PC-3 (cell line): ENCODE measurements at regions of chr16 and their contacts with region 1.

Region 1: DNA sequence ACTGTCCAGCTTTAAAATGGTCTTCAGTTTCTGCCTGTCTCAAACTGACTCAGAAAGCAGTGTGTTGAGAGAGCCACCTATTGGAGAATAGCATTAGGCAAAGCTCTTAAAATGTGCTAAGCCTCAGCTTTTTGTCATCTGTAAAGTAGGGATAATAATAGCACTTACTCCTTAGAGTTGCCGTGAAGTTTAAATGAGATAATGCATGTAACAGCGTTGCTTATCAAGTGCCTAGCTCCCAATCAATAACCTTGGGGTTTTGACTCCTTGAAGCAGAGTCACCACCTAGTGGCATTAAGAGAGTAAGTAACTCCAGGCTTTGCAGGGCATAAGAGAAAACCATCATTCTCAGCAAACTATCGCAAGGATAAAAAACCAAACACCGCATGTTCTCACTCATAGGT is 163.3 kb downstream of the HS3ST2 start:
- DNase-seq: peak; percentile 25
- ATAC-seq: peak; percentile 54
- H3K4me3 ChIP-seq: no peak overlapping the region
- H3K27ac ChIP-seq: no peak overlapping the region
- H3K4me1 ChIP-seq: no peaks in the 10 kb centered on the region
- H3K27me3 ChIP-seq: peaks cover 6% of the 10 kb centered on the region; the same call in 1 of the 2 replicates
- CTCF ChIP-seq: peak; percentile 62

Region 2: DNA sequence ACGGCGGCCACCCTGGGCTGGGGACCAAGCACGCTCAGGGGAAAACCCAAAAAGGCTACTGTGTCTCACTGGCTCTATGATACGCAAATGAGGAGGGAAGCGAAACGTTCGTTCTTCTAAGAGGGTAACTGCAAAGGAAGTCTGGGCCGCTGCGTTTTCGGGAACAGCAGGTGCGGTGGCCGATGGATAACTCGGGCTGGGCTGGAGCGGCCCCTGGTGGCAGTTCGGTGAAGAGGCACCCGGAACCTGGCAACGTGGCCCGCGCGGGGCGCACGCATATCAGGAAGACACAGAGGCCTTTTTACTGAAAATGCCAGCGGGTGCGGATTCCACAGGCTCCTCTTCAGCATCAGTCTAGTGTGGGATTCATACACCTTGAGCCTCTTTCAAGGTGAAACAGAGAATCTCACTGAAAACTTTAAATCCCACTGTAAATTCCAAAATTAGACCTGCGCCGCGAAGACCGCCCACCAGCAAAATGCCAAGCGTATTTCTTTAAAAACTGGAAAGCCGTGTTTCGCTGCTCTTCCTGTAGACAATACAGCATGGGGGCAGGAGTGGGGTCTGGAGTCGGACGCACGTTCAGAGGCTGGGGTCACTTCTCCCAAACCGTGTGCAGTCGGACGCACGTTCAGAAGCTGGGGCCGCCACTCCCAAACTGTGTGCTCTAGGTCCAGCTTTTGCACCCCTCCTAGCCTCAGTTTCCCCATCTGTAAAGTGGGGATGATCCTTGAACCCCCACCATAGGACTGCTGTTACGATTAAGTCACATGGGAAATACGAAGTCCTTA is 1422.3 kb before region 1 on chr16:
- CTCF ChIA-PET with region 1: no interaction called
- POLR2A ChIA-PET with region 1: no interaction called
- intact Hi-C with region 1: loop called (anchors 10 kb)
- DNase-seq: peak; percentile 86
- ATAC-seq: peak; percentile 92
- H3K4me3 ChIP-seq: peak overlapping the region; percentile 59
- H3K27ac ChIP-seq: no peak overlapping the region
- H3K4me1 ChIP-seq: peaks cover 5% of the 10 kb centered on the region
- H3K27me3 ChIP-seq: no peaks in the 10 kb centered on the region
- CTCF ChIP-seq: peak; percentile 89

Region 3: DNA sequence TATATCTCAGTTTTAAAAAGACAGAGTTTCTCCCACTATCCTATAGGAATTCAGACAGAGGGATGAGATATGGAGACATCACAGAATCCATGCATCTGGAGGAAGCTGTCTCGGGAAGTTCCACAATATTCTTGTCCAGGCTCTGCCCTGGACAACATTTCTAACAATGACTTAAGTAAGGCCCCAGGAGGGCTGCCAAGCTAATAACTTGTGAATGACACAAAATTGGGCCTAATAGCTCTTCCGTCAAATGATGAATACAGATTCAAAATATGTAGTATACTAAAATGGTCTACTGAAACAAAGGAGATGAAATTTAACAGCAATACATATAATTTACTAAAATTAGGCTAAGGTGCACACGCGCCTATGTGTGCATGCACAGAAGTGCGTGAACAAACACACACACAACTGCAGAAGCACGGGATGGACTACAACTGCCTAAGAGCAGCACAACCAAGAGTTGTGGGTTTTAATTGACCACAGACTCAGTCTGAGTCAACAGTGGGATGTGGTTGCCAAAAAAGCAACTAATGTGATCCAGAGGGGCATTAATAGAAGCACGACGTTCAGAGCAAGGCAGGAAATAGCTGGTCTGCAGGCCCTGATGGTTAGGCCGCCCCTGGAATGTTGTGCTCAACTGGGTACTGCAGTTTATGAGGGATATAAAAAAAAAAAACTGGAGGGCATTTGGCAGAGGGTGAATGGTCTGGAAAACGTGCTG is 189.7 kb before region 1 on chr16:
- CTCF ChIA-PET with region 1: interaction called, 3 read pairs
- POLR2A ChIA-PET with region 1: no interaction called
- intact Hi-C with region 1: loop called (anchors 10 kb)
- DNase-seq: peak; percentile 87
- ATAC-seq: peak; percentile 88
- H3K4me3 ChIP-seq: no peak overlapping the region
- H3K27ac ChIP-seq: peak overlapping the region; percentile 65
- H3K4me1 ChIP-seq: peaks cover 32% of the 10 kb centered on the region
- H3K27me3 ChIP-seq: no peaks in the 10 kb centered on the region
- CTCF ChIP-seq: no peak

Region 4: GRCh38 chr16:22898874-22899348 is 78.4 kb before region 1 on chr16:
- CTCF ChIA-PET with region 1: no interaction called
- POLR2A ChIA-PET with region 1: no interaction called
- intact Hi-C with region 1: loop called (anchors 1 kb)
- DNase-seq: peak; percentile 55
- ATAC-seq: no peak; the same call in 1 of the 2 replicates
- H3K4me3 ChIP-seq: no peak overlapping the region
- H3K27ac ChIP-seq: no peak overlapping the region
- H3K4me1 ChIP-seq: no peaks in the 10 kb centered on the region
- H3K27me3 ChIP-seq: peaks cover 50% of the 10 kb centered on the region
- CTCF ChIP-seq: peak; percentile 77

Region 5: GRCh38 chr16:23006380-23006779 is 29.1 kb after region 1 on chr16:
- CTCF ChIA-PET with region 1: no interaction called
- POLR2A ChIA-PET with region 1: no interaction called
- intact Hi-C with region 1: no loop called
- DNase-seq: no peak
- ATAC-seq: no peak
- H3K4me3 ChIP-seq: no peak overlapping the region
- H3K27ac ChIP-seq: no peak overlapping the region
- H3K4me1 ChIP-seq: no peaks in the 10 kb centered on the region
- H3K27me3 ChIP-seq: peaks cover 3% of the 10 kb centered on the region; the same call in 1 of the 2 replicates
- CTCF ChIP-seq: no peak

Region 6: DNA sequence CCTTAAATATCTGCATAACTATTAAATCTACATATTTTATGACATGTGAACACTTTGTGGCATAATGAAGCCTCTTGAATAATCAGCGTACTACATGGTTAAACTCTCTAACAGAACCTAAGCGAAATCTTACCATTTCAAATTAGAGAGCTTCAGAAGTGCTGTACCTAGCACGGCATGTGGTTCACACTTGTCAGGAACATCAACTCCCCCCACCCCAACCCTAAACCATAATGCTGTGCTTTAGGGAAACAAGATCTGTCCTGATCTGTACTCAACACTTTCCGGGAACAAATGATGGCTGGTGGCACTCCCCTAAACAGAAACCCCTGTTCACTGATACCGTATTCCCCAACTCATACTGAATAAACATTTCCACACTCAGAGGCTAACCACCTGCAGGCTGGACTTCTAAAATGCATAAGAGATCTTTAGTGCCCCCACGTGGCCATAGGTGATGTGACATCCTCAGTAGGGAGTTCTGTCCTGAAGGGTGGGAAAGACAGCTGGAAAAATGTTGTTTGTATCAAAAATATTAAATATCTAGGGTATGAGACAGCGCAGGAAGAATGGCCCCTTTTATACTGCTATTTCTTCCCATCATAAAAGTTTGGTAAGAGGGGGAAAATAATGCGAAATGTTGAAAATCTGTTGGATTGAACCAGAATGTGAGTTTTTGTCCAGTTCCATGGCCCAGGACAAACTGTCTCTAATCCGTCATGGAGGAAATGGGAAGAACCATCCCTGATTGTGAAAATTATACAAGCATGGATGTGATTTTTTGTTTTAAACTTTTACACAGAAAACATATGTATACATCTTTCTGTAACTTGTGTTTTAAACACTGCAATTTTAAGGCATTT is 83.4 kb after region 1 on chr16:
- CTCF ChIA-PET with region 1: no interaction called
- POLR2A ChIA-PET with region 1: no interaction called
- intact Hi-C with region 1: loop called (anchors 5 kb)
- DNase-seq: peak; percentile 75
- ATAC-seq: peak; percentile 91
- H3K4me3 ChIP-seq: no peak overlapping the region
- H3K27ac ChIP-seq: no peak overlapping the region
- H3K4me1 ChIP-seq: no peaks in the 10 kb centered on the region
- H3K27me3 ChIP-seq: no peaks in the 10 kb centered on the region
- CTCF ChIP-seq: peak; percentile 85

Region 7: GRCh38 chr16:23081675-23082119 is 104.4 kb after region 1 on chr16:
- CTCF ChIA-PET with region 1: no interaction called
- POLR2A ChIA-PET with region 1: no interaction called
- intact Hi-C with region 1: no loop called
- DNase-seq: no peak
- ATAC-seq: peak; percentile 15; the same call in 1 of the 2 replicates
- H3K4me3 ChIP-seq: no peak overlapping the region
- H3K27ac ChIP-seq: no peak overlapping the region
- H3K4me1 ChIP-seq: peaks cover 13% of the 10 kb centered on the region
- H3K27me3 ChIP-seq: no peaks in the 10 kb centered on the region
- CTCF ChIP-seq: no peak